ENCODE measurements at regions of chr20 and their contacts with region 1.

Region 1: GRCh38 chr20:19692685-19693119 is 65.4 kb upstream of the RIN2 start:
- DNase-seq: peak; percentile 35 to 66 (median 52)
- ATAC-seq: peak; percentile 50
- H3K4me3 ChIP-seq: no peak overlapping the region
- H3K27ac ChIP-seq: no peak overlapping the region
- H3K4me1 ChIP-seq: no peaks in the 10 kb centered on the region
- H3K27me3 ChIP-seq: no peaks in the 10 kb centered on the region
- CTCF ChIP-seq: peak; percentile 74 to 93 (median 83)
- POLR2A ChIP-seq: no peak

Region 2: GRCh38 chr20:20003031-20003954 is 310.6 kb after region 1 on chr20:
- intact Hi-C with region 1: loop called (anchors 10 kb)
- DNase-seq: peak; percentile 67 to 79 (median 72)
- ATAC-seq: peak; percentile 76
- H3K4me3 ChIP-seq: no peak overlapping the region
- H3K27ac ChIP-seq: peak overlapping the region; percentile 30 to 69 (median 63)
- H3K4me1 ChIP-seq: peaks cover 65% of the 10 kb centered on the region
- H3K27me3 ChIP-seq: no peaks in the 10 kb centered on the region
- CTCF ChIP-seq: no peak
- POLR2A ChIP-seq: peak in 2 of 3 donors; percentile 27 to 36

Region 3: DNA sequence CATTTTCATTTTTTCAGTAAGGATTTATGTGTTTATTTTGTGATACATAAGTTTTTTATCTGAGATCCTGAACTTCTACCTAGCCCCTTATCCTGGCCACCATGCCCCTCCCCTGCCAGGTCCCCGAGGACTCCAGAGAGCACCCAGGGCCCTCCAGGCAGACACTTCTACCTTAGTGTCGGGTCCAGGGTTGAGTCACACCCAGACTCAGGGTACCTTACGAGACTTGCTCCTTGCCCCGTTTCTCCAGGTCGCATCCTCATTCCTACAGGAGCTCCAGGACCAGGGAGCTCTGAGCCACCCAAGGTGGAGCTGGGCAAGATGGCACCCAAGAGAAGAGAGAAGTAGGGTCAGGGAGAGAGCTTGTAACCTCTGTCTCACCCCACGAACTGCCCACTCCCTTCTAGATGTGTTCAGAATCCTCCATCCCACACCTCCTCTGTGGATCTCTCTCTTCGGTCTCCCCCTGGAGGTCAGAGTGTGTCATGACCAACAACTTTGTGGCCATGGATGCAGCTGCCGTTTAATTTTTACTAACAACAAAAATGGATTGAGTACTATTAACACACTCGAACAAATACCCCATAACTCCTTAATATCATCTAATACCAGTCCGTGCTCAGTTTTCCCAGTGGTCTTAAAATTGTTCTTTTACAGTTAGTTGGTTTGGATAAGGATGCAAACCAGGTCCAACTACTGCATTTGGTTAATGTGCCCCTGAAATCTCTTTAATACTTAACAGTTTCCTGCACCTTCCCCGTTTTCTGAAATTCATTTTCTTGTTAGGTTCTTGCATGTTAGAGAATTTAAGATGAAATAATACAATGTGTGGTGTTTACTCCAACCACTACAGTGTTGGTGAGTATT is 544.6 kb after region 1 on chr20:
- intact Hi-C with region 1: loop called (anchors 10 kb)
- DNase-seq: peak; percentile 42 to 49 (median 48)
- ATAC-seq: peak; percentile 68
- H3K4me3 ChIP-seq: no peak overlapping the region
- H3K27ac ChIP-seq: no peak overlapping the region
- H3K4me1 ChIP-seq: no peaks in the 10 kb centered on the region
- H3K27me3 ChIP-seq: no peaks in the 10 kb centered on the region
- CTCF ChIP-seq: peak in 6 of 7 experiments; percentile 55 to 69 (median 65)
- POLR2A ChIP-seq: no peak

Measured in body of pancreas (tissue), 4 donors.